Activated naive CD8-positive, alpha-beta T cell treated with anti-CD3 and anti-CD28 coated beads, Interleukin-2, amount 10 ng/mL, durations not matched to agents 7 days and 5 days (primary cell): ENCODE measurements at regions of chr2 and their contacts with region 1.

Region 1: GRCh38 chr2:12716282-12717190 is at the start of gene TRIB2:
- DNase-seq: peak; percentile 89
- ATAC-seq: peak; percentile 89
- H3K4me3 Mint-ChIP-seq: peak within 1 kb of the TSS; percentile 97
- H3K27ac Mint-ChIP-seq: peak within 1 kb of the TSS; percentile 94
- H3K4me1 Mint-ChIP-seq: peaks cover 41% of the 10 kb centered on the region
- H3K27me3 Mint-ChIP-seq: peaks cover 6% of the 10 kb centered on the region
- total RNA-seq, gene TRIB2: 48.7 to 54.0 TPM

Region 2: GRCh38 chr2:11829947-11830707 is 886.4 kb before region 1 on chr2:
- POLR2A ChIA-PET with region 1: interaction called, 11 read pairs
- DNase-seq: peak; percentile 59
- ATAC-seq: peak; percentile 84
- H3K4me3 Mint-ChIP-seq: peak overlapping the region; percentile 76
- H3K27ac Mint-ChIP-seq: peak overlapping the region; percentile 88
- H3K4me1 Mint-ChIP-seq: peaks cover 48% of the 10 kb centered on the region
- H3K27me3 Mint-ChIP-seq: peaks cover 5% of the 10 kb centered on the region

Region 3: DNA sequence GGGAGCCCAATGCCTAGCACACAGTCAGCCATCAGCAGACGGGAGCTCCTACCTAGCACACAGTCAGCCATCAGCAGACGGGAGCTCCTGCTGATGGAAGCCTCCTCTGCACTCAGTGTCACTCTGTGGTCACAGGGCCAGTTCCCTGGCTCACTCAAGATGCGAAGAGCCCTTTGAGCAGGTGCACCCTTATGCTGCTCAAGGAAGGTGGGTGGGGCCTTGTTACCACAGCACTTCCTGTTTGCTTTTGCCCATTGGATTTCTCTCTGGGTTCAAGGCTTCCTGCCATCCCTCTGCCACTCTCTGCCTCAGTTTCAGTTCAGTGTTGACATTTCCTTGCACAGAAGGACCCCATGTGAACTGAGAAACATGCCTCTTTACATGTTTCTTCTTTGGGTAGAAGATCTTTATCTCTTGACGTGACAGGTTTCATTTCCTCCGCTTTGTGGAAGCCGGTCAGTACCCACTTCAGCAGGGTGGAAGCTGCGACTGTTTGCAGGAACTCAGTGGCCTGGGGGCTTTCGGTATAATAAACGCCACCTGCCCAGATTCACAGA is 11.8 kb after region 1 on chr2:
- POLR2A ChIA-PET with region 1: interaction called, 30 read pairs
- DNase-seq: peak; percentile 67
- ATAC-seq: peak; percentile 91
- H3K4me3 Mint-ChIP-seq: peak overlapping the region; percentile 73
- H3K27ac Mint-ChIP-seq: peak overlapping the region; percentile 90
- H3K4me1 Mint-ChIP-seq: peaks cover 60% of the 10 kb centered on the region
- H3K27me3 Mint-ChIP-seq: no peaks in the 10 kb centered on the region

Region 4: DNA sequence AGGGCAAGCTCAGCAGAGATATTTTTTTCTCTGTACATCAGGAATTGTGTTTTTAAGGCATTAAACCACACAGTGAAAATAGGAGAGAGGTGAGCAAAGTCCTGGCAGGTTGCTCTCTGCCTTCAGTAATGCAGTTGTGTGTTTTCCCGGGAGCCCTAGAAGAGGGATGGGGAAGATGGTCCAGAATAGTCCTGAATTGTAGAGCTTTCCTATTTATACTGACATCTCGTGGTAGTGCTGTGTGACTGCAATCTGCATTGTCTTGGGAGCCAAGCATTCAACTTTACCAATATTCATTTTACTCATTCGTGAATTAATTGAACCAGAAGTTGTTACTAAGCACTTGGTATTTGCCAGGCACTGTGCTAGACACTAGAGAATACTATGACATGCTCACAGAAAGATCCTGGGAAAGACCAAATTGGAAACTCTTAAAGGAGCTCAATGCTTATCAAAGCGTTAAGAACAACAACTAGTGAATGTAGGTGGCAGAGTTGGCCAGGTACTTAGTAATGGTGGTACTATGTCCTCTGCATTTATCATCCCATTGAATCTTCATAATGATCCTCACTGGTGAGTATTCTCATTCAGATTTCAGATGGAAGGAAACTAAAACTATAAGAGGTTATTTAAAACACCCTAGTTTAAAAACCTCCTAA is 214.8 kb after region 1 on chr2:
- POLR2A ChIA-PET with region 1: interaction called, 15 read pairs
- DNase-seq: no peak
- ATAC-seq: no peak
- H3K4me3 Mint-ChIP-seq: no peak overlapping the region
- H3K27ac Mint-ChIP-seq: no peak overlapping the region
- H3K4me1 Mint-ChIP-seq: peaks cover 9% of the 10 kb centered on the region
- H3K27me3 Mint-ChIP-seq: peaks cover 34% of the 10 kb centered on the region